HepG2 (cell line): ENCODE measurements at regions of chr5 and their contacts with region 1.

Region 1: DNA sequence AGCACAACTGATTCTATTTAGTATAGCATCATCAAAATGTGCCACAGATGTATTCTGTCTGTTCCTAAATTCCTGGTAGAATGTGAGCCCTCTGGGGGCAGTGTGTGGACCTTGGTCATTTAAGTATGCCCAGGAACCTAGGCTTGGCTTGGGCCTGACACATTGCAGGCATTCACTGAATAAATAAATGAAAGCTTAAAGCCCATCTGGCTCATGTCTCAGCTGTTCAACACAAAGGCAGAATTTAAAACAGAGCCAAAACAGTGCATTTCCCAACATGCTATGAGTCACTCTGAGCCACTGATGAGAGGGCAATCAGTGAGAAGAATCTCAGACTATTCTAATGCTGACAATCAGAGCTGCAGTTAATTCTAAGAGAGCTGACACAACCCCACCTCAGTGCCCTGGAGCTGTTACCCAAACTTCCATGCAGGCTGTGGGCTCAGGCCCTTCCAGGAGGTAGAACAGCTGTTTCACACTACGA is 8.1 kb downstream of the FAM193B start:
- DNase-seq: peak; percentile 93
- ATAC-seq: peak; percentile 98
- H3K4me3 ChIP-seq: no peak overlapping the region
- H3K27ac ChIP-seq: peak overlapping the region; percentile 64
- H3K4me1 ChIP-seq: peaks cover 39% of the 10 kb centered on the region
- H3K27me3 ChIP-seq: no peaks in the 10 kb centered on the region
- CTCF ChIP-seq: peak; percentile 36
- EP300 ChIP-seq: peak in 1 of 2 experiments; percentile 33; a peak in 1 of 4 replicates
- POLR2A ChIP-seq: no peak
- RAD21 ChIP-seq: no peak

Region 2: DNA sequence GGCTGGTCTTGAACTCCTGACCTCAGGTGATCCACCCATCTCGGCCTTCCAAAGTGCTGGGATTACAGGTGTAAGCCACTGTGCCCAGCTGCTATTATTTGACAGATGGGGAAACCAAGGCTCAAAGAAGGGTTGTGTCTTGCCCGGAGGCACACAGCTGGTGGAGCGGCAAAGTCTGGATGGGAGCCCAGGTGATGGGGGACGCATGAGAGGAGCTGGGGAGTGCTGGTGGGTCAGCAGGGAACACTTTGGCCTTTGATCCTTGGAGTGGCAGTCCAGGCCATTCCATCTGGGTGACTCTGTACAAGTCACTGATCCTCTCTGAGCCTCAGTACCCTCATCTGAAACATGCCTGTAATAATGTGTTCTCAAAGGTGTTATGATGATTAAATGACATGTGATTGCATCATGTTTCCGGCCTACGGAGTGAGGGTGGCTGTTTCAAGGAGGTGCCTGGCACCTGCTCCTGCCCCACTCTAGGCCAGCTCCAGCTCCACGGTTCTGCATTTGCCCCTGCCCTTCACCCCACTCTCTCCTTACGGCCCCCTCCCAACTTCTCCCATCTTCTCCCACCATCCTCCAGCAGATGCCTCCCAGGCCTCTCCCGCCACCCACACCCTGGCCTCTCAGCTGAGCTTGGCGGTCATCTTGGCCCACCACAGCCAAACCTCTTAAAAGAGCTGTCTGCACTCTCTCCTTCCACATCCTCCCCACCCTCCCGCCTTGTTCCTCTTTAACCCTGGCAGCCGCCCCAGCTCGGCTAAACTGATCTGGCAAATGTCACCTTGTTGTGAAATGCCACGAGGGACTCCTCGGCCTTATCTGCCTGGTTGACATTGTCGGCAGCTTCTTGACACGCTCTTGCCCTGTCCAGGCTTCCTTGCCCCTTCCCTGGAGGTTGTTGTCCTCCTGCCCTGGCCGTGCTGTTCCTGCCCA is 67.3 kb before region 1 on chr5:
- CTCF ChIA-PET with region 1: no interaction called
- POLR2A ChIA-PET with region 1: no interaction called
- in situ Hi-C with region 1: no loop called
- intact Hi-C with region 1: no loop called
- DNase-seq: no peak
- ATAC-seq: peak; percentile 5; the same call in 1 of the 3 replicates
- H3K4me3 ChIP-seq: no peak overlapping the region
- H3K27ac ChIP-seq: no peak overlapping the region
- H3K4me1 ChIP-seq: peaks cover 54% of the 10 kb centered on the region
- H3K27me3 ChIP-seq: no peaks in the 10 kb centered on the region
- CTCF ChIP-seq: no peak
- EP300 ChIP-seq: no peak
- POLR2A ChIP-seq: no peak
- RAD21 ChIP-seq: no peak

Region 3: GRCh38 chr5:177524941-177525618 is 21.2 kb before region 1 on chr5:
- CTCF ChIA-PET with region 1: no interaction called
- POLR2A ChIA-PET with region 1: no interaction called
- in situ Hi-C with region 1: no loop called
- intact Hi-C with region 1: no loop called
- DNase-seq: no peak
- ATAC-seq: no peak
- H3K4me3 ChIP-seq: no peak overlapping the region
- H3K27ac ChIP-seq: no peak overlapping the region
- H3K4me1 ChIP-seq: no peaks in the 10 kb centered on the region
- H3K27me3 ChIP-seq: no peaks in the 10 kb centered on the region
- CTCF ChIP-seq: no peak
- EP300 ChIP-seq: no peak
- POLR2A ChIP-seq: no peak
- RAD21 ChIP-seq: no peak

Region 4: GRCh38 chr5:177557041-177557647 is 10.8 kb after region 1 on chr5:
- CTCF ChIA-PET with region 1: no interaction called
- POLR2A ChIA-PET with region 1: no interaction called
- in situ Hi-C with region 1: no loop called
- intact Hi-C with region 1: no loop called
- DNase-seq: peak; percentile 45
- ATAC-seq: peak; percentile 17
- H3K4me3 ChIP-seq: peak overlapping the region in 1 of 3 experiments; percentile 31; a peak in 2 of 6 replicates
- H3K27ac ChIP-seq: peak overlapping the region; percentile 25
- H3K4me1 ChIP-seq: peaks cover 52% of the 10 kb centered on the region
- H3K27me3 ChIP-seq: no peaks in the 10 kb centered on the region
- CTCF ChIP-seq: no peak
- EP300 ChIP-seq: no peak
- POLR2A ChIP-seq: no peak
- RAD21 ChIP-seq: no peak

Region 5: DNA sequence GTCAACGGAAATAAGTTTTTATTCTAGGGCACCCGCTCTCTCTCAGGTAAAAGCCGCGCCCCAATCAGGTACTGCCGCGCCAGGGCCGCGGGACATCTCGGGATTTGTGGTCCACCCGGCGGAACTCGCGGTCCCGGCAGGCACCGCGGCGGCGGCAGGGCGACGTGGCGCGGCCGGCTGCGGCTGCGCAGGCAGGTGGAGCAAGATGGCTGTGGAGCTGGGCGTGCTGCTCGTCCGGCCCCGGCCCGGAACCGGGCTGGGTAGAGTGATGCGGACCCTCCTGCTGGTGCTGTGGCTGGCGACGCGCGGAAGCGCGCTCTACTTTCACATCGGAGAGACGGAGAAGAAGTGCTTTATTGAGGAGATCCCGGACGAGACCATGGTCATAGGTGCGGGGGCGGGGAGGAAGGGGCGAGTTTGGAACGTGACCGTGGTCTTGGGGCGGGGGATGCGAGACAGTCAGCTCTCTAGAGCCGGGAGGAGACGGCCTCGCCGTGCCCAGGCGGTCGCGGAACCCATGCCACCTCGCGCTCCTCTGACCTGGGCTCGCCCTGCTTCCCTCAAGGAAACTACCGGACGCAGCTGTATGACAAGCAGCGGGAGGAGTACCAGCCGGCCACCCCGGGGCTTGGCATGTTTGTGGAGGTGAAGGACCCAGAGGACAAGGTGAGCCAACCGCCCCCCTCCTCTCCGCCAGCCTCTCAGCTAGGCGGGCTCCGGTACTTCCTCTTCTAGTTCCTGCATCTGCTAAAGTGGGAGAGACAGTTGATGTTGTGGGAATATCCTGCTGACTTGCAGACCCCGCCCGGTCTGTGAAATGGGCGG is 45.9 kb after region 1 on chr5 and contains the start of gene TMED9:
- CTCF ChIA-PET with region 1: no interaction called
- POLR2A ChIA-PET with region 1: interaction called, 12 read pairs
- in situ Hi-C with region 1: no loop called
- intact Hi-C with region 1: loop called (anchors 5 kb)
- DNase-seq: peak; percentile 71
- ATAC-seq: peak; percentile 95
- H3K4me3 ChIP-seq: peak within 1 kb of the TSS; percentile 93 to 97 (median 95)
- H3K27ac ChIP-seq: peak within 1 kb of the TSS; percentile 74
- H3K4me1 ChIP-seq: peaks cover 41% of the 10 kb centered on the region
- H3K27me3 ChIP-seq: no peaks in the 10 kb centered on the region; a peak in 1 of 5 replicates
- CTCF ChIP-seq: peak; percentile 18; the same call in 1 of the 2 replicates
- EP300 ChIP-seq: no peak
- POLR2A ChIP-seq: peak; percentile 94 to 97
- RAD21 ChIP-seq: no peak; the same call in 1 of the 2 replicates
- total RNA-seq, gene TMED9: 92.1 and 161 TPM in 2 replicates